Heart right ventricle (tissue), 16 donors: ENCODE measurements at regions of chr5 and their contacts with region 1.

Region 1: DNA sequence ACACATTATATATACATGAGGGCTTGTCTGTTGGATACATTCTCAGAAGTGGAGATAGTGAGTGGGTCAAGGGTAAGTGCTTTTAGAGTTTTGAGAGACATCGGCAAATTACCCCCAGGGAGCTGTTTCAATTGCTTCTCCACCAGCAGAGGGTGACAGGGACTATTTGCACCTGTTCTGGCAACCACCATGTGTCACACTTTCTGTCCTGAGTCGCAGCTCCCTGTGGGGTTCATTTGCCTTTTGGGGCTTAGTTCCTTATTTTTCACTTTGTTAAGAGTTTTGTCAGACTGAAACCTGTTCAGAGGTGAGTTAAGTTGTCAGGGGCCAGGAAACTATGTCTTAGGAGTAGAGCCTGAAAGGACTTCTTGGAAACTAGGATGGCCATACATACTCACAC is 20.1 kb upstream of the SLC36A1 start:
- DNase-seq: no peak
- ATAC-seq: no peak
- H3K4me3 ChIP-seq: no peak overlapping the region
- H3K27ac ChIP-seq: no peak overlapping the region
- H3K4me1 ChIP-seq: no peaks in the 10 kb centered on the region
- H3K27me3 ChIP-seq: peaks cover 0 to 21% (median 4%) of the 10 kb centered on the region in 7 donors
- CTCF ChIP-seq: no peak

Region 2: DNA sequence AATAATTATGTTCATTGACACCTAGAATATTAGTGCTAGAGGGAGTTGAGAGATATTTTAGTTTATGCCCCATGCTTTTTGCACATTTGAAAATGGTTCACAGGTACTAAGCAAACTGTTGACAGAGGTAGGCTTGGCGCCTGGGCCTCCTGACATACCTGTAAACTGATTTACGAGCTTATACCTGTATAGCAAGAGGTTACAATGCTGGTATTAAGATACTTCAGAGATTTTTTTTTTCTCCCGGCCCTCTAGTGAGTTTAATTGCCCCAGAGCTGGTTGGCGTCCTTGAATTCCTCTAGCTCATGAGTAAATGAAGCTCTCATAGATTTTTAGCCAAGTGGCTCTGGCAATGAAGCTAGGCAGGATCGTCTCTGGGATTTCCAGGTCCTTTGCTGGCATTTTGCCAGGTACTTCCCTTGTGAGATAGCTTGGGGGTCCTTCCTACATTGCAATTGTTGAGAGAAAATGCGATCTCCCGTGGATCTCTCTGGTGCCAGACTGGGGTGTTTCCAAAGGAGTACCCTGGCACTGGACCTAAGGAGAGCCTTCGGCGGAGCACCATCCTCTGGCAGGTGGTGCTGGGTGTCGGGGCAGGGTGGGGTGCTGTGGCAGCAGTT is 29.2 kb after region 1 on chr5:
- intact Hi-C with region 1: loop called in 1 of 10 experiments (anchors 1 kb)
- DNase-seq: no peak
- ATAC-seq: peak in 1 of 8 donors; percentile 15
- H3K4me3 ChIP-seq: no peak overlapping the region
- H3K27ac ChIP-seq: no peak overlapping the region
- H3K4me1 ChIP-seq: peaks cover 0 to 9% (median 0%) of the 10 kb centered on the region in 9 donors
- H3K27me3 ChIP-seq: no peaks in the 10 kb centered on the region
- CTCF ChIP-seq: no peak